Cardiac septum (tissue), 1 donor: ENCODE measurements at regions of chr17 and their contacts with region 1.

Region 1: DNA sequence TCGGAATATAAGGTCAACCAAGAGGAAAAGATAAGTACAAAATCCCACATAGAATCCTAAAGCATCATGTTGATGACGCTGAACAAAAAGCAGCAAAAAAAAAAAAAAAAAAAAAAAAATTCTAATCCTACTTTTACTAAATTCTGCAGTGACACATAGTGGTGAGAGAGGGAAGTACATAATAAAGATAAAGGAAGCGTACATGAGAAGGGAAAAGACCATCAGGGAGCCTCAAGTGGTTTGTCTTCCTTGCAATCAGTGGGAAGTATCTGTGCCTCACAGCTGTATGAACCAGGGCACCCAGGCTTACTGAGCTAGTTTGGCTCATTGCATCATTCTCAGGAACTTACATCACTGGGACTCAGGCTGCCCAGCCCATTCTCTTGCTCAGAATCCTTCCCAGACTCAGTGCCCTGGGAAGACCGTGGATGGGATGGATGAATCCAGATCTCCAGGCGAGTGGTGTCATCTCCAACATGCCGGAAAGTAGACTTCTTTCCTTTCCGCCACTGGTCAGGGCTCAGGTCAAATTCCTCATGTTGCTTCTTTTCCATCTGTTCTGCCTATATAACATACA is 21.2 kb downstream of the SMG6 start:
- DNase-seq: no peak

Region 2: DNA sequence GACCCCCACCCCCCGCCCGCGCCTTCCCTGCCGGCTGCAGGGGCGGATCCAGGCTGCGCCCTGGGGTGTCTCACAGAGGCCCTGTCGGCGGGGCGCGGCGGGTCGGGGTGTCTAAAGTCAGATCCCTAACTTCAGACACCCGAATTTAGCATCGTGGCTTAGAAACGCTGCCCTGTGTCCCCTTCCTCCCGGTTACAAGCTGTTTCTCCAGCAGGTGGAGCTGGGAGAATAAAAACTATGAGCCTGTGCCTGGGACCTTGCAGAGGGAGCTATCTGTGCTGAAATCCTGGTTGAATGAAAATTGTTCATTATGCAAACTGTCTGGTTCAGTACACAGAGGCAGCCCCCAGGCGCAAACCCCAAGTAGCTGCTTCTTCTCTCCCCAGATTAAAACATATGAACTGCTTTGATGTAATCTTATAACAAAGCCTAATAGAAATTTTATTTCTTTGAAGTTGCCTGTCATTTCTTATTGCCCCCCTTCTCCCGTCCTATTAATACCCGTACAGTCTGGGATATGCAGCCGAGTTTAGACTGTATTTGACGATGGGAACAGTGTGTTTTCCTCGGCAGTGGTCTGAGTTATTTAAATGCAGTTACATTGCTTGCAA is 373.6 kb before region 1 on chr17:
- intact Hi-C with region 1: loop called (anchors 10 kb)
- DNase-seq: no peak